ENCODE measurements at regions of chr16 and their contacts with region 1.

Region 1: GRCh38 chr16:71499775-71500364 is 10.7 kb upstream of the ZNF19 start:
- DNase-seq: peak; percentile 28
- ATAC-seq: peak; percentile 88
- H3K4me3 ChIP-seq: no peak overlapping the region
- H3K27ac ChIP-seq: no peak overlapping the region
- H3K4me1 ChIP-seq: no peaks in the 10 kb centered on the region
- H3K27me3 ChIP-seq: no peaks in the 10 kb centered on the region
- CTCF ChIP-seq: peak; percentile 65 to 87 (median 79)
- EP300 ChIP-seq: no peak
- POLR2A ChIP-seq: no peak
- RAD21 ChIP-seq: peak; percentile 89

Region 2: DNA sequence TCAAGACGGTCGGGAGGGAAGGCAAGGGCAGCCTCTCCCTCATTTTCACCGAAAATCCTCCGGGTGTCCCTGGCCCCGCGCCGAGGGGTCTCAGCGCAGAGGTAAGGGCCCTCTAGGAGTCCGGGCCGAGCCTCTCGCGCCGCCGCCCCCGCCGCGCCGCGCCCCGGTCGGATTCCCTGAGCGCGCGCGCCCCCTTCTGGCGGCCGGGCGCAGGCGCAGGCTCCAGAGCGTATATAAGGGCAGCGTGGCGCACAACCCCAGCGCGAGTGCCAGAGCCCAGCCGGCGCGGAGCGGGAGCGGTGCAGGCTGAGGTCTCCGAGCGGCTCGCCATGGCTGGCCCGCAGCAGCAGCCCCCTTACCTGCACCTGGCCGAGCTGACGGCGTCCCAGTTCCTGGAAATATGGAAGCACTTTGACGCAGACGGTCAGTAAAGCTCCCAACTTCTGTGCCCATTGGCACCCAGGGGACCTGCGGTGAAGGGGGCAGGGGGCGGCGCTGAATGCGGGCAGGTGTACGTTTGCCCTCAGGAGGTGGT is 141.3 kb before region 1 on chr16 and contains the start of gene CALB2:
- CTCF ChIA-PET with region 1: no interaction called
- POLR2A ChIA-PET with region 1: no interaction called
- RAD21 ChIA-PET with region 1: interaction called, 4 read pairs
- SMC1A ChIA-PET with region 1: no interaction called
- in situ Hi-C with region 1: no loop called
- intact Hi-C with region 1: loop called (anchors 5 kb)
- DNase-seq: no peak
- ATAC-seq: peak; percentile 99
- H3K4me3 ChIP-seq: no peak within 1 kb of the TSS
- H3K27ac ChIP-seq: no peak within 1 kb of the TSS
- H3K4me1 ChIP-seq: no peaks in the 10 kb centered on the region
- H3K27me3 ChIP-seq: peaks cover 0 to 1% of the 10 kb centered on the region in 2 experiments; a peak in 3 of 4 replicates
- CTCF ChIP-seq: peak; percentile 77 to 92 (median 89)
- EP300 ChIP-seq: no peak
- POLR2A ChIP-seq: no peak
- RAD21 ChIP-seq: peak; percentile 87
- polyA plus RNA-seq, gene CALB2: not detected

Region 3: DNA sequence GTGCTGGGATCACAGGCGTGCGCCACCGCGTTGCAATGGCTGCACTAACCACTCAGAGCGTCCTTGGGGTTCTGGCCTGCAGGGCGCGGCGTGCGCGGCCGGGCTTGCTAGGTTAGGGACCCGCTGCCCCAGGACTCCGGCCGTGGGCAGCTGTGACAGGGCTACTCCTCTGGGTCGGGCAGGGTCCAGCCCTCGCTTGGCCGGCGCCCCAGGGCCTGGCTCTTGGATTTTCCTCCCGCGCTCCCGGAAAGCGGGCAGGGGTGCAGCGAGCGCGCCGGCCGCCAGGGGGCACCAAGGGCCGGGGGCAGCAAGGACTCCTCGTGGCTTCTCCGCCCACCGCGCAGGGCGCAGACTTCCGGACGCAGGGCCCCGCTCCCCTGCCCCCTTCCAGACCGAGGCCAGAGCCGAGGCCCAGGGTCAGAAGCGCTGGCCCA is 58.5 kb before region 1 on chr16:
- CTCF ChIA-PET with region 1: interaction called, 6 read pairs
- POLR2A ChIA-PET with region 1: no interaction called
- RAD21 ChIA-PET with region 1: interaction called, 3 read pairs
- SMC1A ChIA-PET with region 1: interaction called, 6 read pairs
- in situ Hi-C with region 1: no loop called
- intact Hi-C with region 1: loop called (anchors 2 kb)
- DNase-seq: no peak
- ATAC-seq: no peak
- H3K4me3 ChIP-seq: no peak overlapping the region
- H3K27ac ChIP-seq: no peak overlapping the region
- H3K4me1 ChIP-seq: no peaks in the 10 kb centered on the region
- H3K27me3 ChIP-seq: no peaks in the 10 kb centered on the region; a peak in 1 of 4 replicates
- CTCF ChIP-seq: peak in 2 of 3 experiments; percentile 3 to 37; a peak in 1 of 6 replicates
- EP300 ChIP-seq: no peak
- POLR2A ChIP-seq: no peak
- RAD21 ChIP-seq: 0 out of 2 replicates have a peak, but pooled peaks have one; percentile 11

Region 4: DNA sequence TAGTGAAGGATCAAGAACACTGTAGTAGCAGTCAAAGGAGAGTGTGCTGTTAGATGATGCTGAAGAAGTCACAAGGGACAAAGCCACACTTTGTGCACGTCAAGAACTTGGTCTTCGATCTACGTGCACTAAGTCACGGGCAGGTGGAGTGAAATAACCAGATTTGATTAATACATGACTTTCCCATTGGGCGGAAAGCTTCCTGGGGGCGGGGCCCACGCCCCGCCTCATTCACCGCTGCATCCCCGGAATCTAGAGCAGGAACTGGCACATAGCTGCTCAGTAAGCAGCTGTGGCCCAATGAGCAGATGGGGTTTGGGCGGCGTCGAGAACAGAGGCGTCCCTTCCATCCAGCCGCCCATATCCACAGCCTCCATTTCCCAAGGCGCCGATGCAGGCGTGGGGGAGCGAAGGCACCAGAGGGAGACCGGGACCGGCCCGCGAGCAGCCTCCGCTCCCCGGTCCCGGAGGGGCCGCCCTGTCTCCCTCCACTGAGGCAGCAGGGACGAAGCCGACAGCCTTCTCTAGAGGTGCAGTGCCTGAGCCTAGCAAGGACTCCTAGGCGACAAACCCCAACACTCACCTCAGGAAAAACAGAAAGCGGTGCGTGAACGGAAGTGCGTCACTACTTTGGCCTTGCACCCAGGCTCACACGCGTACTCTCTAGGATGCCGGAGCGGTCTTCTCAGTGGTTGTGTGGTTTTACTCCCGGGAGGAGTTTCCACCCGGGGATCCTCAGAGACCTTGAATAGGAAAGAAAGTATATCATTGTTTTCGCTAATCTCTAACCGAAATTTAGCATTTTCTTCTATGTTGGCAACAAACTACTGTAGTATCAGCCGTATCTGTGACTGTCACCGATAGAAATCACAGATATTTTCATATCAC is 15.6 kb before region 1 on chr16:
- CTCF ChIA-PET with region 1: interaction called, 34 read pairs
- POLR2A ChIA-PET with region 1: no interaction called
- RAD21 ChIA-PET with region 1: interaction called, 3 read pairs
- SMC1A ChIA-PET with region 1: interaction called, 5 read pairs
- in situ Hi-C with region 1: no loop called
- intact Hi-C with region 1: no loop called
- DNase-seq: peak; percentile 82
- ATAC-seq: peak; percentile 94
- H3K4me3 ChIP-seq: peak overlapping the region; percentile 65
- H3K27ac ChIP-seq: peak overlapping the region; percentile 96
- H3K4me1 ChIP-seq: peaks cover 3% of the 10 kb centered on the region; the same call in 1 of the 2 replicates
- H3K27me3 ChIP-seq: no peaks in the 10 kb centered on the region
- CTCF ChIP-seq: no peak
- EP300 ChIP-seq: no peak
- POLR2A ChIP-seq: peak; percentile 86
- RAD21 ChIP-seq: no peak

Region 5: GRCh38 chr16:71537643-71538042 is 37.8 kb after region 1 on chr16:
- CTCF ChIA-PET with region 1: interaction called, 134 read pairs
- POLR2A ChIA-PET with region 1: no interaction called
- RAD21 ChIA-PET with region 1: interaction called, 19 read pairs
- SMC1A ChIA-PET with region 1: interaction called, 37 read pairs
- in situ Hi-C with region 1: no loop called
- intact Hi-C with region 1: loop called (anchors 2 kb)
- DNase-seq: peak; percentile 21
- ATAC-seq: peak; percentile 96
- H3K4me3 ChIP-seq: no peak overlapping the region
- H3K27ac ChIP-seq: no peak overlapping the region
- H3K4me1 ChIP-seq: 0 out of 2 replicates have a peak, but pooled peaks cover 4% of the 10 kb centered on the region
- H3K27me3 ChIP-seq: no peaks in the 10 kb centered on the region
- CTCF ChIP-seq: peak; percentile 84 to 87 (median 86)
- EP300 ChIP-seq: no peak
- POLR2A ChIP-seq: no peak
- RAD21 ChIP-seq: peak; percentile 71

Region 6: DNA sequence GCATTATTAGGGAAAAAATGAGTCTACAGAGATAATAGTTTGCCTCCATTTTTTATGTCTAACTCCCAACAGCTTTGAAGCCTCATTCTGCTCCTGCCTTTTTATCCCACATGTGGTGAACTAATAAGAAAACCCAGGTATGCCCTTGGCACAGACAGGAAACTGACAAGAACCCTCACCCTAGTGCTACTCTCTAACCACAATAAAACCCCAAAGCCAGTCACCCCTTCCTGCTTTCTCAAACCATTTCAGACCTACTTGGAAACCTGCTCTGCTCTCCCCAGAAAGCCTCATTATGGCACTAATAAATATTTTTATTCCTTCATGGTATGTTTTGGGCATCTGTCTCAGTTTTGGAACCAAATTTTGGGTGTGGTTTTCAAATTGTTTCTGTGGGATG is 122.2 kb after region 1 on chr16:
- CTCF ChIA-PET with region 1: no interaction called
- POLR2A ChIA-PET with region 1: no interaction called
- RAD21 ChIA-PET with region 1: no interaction called
- SMC1A ChIA-PET with region 1: no interaction called
- in situ Hi-C with region 1: no loop called
- intact Hi-C with region 1: no loop called
- DNase-seq: no peak
- ATAC-seq: no peak
- H3K4me3 ChIP-seq: no peak overlapping the region
- H3K27ac ChIP-seq: no peak overlapping the region
- H3K4me1 ChIP-seq: peaks cover 5% of the 10 kb centered on the region; the same call in 1 of the 2 replicates
- H3K27me3 ChIP-seq: no peaks in the 10 kb centered on the region; a peak in 1 of 4 replicates
- CTCF ChIP-seq: no peak
- EP300 ChIP-seq: no peak
- POLR2A ChIP-seq: no peak
- RAD21 ChIP-seq: no peak

Region 7: GRCh38 chr16:71961066-71962039 is 461.5 kb after region 1 on chr16:
- CTCF ChIA-PET with region 1: interaction called, 10 read pairs
- POLR2A ChIA-PET with region 1: no interaction called
- RAD21 ChIA-PET with region 1: interaction called, 6 read pairs
- SMC1A ChIA-PET with region 1: no interaction called
- in situ Hi-C with region 1: no loop called
- intact Hi-C with region 1: no loop called
- DNase-seq: peak; percentile 52
- ATAC-seq: peak; percentile 96
- H3K4me3 ChIP-seq: no peak overlapping the region
- H3K27ac ChIP-seq: no peak overlapping the region
- H3K4me1 ChIP-seq: peaks cover 9% of the 10 kb centered on the region
- H3K27me3 ChIP-seq: no peaks in the 10 kb centered on the region; a peak in 1 of 4 replicates
- CTCF ChIP-seq: peak; percentile 82 to 96 (median 87)
- EP300 ChIP-seq: no peak
- POLR2A ChIP-seq: no peak
- RAD21 ChIP-seq: peak; percentile 94

Measured in GM12878 (cell line).